CD4-positive, alpha-beta T cell (primary cell): ENCODE measurements at regions of chr11 and their contacts with region 1.

Region 1: DNA sequence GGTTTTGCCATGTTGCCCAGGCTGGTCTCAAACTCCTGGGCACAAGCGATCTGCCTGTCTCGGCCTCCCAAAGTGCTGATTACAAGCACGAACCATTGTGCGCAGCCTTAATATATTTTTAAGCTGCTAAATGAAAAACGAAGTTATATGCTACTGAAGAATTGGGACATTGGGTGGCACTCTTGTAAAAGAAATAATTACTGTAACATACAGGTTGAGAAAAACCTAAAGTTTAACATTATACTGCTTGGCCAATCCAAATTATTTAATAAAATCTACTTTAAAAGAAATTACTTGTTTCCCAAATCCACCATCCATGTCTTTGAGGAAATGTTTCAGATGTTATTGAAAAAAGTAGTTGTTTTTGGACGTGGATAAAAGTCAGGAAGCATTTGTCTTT is 37.9 kb upstream of the ARHGAP32 start:
- DNase-seq: peak in 3 of 14 experiments; percentile 13 to 26 (median 19)
- ATAC-seq: no peak
- H3K4me3 ChIP-seq: no peak overlapping the region
- H3K4me3 Mint-ChIP-seq: no peak overlapping the region
- H3K27ac ChIP-seq: no peak overlapping the region
- H3K27ac Mint-ChIP-seq: no peak overlapping the region
- H3K4me1 ChIP-seq: no peaks in the 10 kb centered on the region
- H3K4me1 Mint-ChIP-seq: no peaks in the 10 kb centered on the region
- H3K27me3 ChIP-seq: no peaks in the 10 kb centered on the region
- H3K27me3 Mint-ChIP-seq: no peaks in the 10 kb centered on the region
- CTCF ChIP-seq: peak; percentile 28

Region 2: GRCh38 chr11:129117595-129118350 is 112.2 kb before region 1 on chr11:
- CTCF ChIA-PET with region 1: no interaction called
- POLR2A ChIA-PET with region 1: no interaction called
- intact Hi-C with region 1: loop called in 1 of 2 experiments (anchors 10 kb)
- DNase-seq: peak in 12 of 14 experiments; percentile 12 to 76 (median 26)
- ATAC-seq: no peak
- H3K4me3 ChIP-seq: no peak overlapping the region
- H3K4me3 Mint-ChIP-seq: no peak overlapping the region
- H3K27ac ChIP-seq: no peak overlapping the region
- H3K27ac Mint-ChIP-seq: no peak overlapping the region
- H3K4me1 ChIP-seq: no peaks in the 10 kb centered on the region
- H3K4me1 Mint-ChIP-seq: no peaks in the 10 kb centered on the region
- H3K27me3 ChIP-seq: no peaks in the 10 kb centered on the region
- H3K27me3 Mint-ChIP-seq: no peaks in the 10 kb centered on the region
- CTCF ChIP-seq: peak; percentile 83

Region 3: DNA sequence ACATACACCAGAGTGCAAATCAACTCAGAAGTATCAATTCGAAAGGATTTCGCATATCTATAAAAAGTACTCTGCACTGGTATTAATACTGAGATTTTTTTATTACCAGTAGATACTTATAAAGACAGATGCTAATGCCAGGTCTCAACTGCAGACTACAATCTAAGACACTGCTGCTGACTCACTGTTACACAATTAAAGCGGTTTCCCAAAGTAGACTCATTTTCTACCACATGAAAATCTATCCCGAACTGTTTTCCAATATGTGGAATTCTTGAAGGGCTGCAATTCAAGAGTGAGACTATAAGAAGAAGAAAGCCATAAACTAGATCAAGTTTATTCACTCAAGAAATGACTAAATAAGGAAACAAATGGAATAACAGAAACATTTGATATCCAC is 19.3 kb after region 1 on chr11:
- CTCF ChIA-PET with region 1: no interaction called
- POLR2A ChIA-PET with region 1: no interaction called
- intact Hi-C with region 1: no loop called
- DNase-seq: no peak
- ATAC-seq: no peak
- H3K4me3 ChIP-seq: no peak overlapping the region
- H3K4me3 Mint-ChIP-seq: no peak overlapping the region
- H3K27ac ChIP-seq: no peak overlapping the region
- H3K27ac Mint-ChIP-seq: no peak overlapping the region
- H3K4me1 ChIP-seq: no peaks in the 10 kb centered on the region
- H3K4me1 Mint-ChIP-seq: peaks cover 48% of the 10 kb centered on the region
- H3K27me3 ChIP-seq: no peaks in the 10 kb centered on the region
- H3K27me3 Mint-ChIP-seq: no peaks in the 10 kb centered on the region
- CTCF ChIP-seq: no peak

Region 4: DNA sequence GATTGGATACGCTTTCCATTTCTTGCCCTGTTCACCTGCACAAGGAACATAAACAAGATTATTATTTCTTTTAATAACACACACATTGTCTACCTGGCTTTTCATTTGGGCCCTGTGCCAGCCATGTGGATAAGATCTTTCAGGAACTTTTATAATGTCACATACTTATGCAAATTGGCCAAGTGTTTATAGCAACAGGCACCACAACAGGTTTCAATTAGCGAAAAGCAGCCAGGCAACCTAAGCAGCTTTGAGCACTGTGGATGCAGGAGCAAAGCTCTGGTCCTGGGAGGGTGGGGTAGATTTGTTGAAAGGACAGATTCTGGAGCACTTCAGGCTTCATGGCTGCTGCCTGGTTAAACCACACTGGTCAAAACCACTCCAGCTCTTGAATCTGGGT is 363.1 kb after region 1 on chr11:
- CTCF ChIA-PET with region 1: no interaction called
- POLR2A ChIA-PET with region 1: no interaction called
- intact Hi-C with region 1: no loop called
- DNase-seq: no peak
- ATAC-seq: no peak
- H3K4me3 ChIP-seq: no peak overlapping the region
- H3K4me3 Mint-ChIP-seq: no peak overlapping the region
- H3K27ac ChIP-seq: no peak overlapping the region
- H3K27ac Mint-ChIP-seq: no peak overlapping the region
- H3K4me1 ChIP-seq: no peaks in the 10 kb centered on the region
- H3K4me1 Mint-ChIP-seq: no peaks in the 10 kb centered on the region
- H3K27me3 ChIP-seq: peaks cover 0 to 9% of the 10 kb centered on the region in 2 experiments
- H3K27me3 Mint-ChIP-seq: peaks cover 25% of the 10 kb centered on the region
- CTCF ChIP-seq: no peak